GM10248 (cell line): ENCODE measurements at regions of chr19 and their contacts with region 1.

Region 1: GRCh38 chr19:11482384-11483050 is 1.7 kb upstream of the ELAVL3 start:
- DNase-seq: peak; percentile 93
- CTCF ChIP-seq: peak; percentile 96

Region 2: GRCh38 chr19:11346092-11346940 is 136.2 kb before region 1 on chr19 and contains the starts of genes CCDC159 and TMEM205:
- CTCF ChIA-PET with region 1: interaction called, 11 read pairs
- POLR2A ChIA-PET with region 1: no interaction called
- DNase-seq: peak; percentile 97
- CTCF ChIP-seq: peak; percentile 26

Region 3: DNA sequence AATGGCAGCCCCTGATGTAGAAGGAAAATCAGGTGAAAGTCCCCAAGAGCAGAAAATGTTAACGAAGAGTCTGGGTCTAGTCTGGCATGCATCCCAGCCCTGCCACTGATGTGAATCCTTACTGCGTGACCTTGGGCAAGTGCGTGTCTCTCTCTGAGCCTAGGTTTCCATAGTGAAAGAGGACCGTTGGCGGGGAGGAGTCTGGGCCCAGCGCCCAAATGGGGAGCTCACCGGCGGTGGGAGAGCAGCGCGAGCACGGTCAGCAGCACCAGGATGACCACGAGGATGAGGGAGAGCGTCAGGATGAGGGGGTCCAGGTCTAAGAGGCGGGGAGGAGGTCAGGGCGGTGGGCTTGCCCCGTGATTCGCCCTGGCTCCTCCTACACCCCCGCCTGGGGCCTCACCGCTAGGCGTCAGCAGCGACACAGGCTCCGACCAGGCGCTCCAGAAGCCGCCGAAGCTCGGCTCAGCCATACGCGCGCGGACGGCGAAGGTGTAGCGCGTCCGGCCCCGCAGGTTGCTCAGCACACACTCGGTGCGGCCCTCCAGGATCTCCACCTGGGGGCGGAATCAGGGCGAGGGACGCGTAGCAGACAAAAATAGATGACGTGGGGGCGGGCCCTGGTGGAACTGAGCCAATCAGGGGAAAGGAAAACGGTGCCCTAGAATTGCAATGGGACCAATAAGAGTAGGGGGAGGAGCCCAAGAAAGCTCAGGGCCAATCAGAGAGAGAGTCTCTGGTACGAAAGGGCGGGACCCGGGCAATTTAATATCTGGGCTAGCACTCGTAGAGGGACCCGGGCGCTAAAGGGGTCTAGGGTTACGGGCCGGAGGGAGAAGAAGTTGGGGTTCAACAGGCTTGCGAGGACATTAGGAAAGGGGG is 101.6 kb before region 1 on chr19:
- CTCF ChIA-PET with region 1: interaction called, 40 read pairs
- POLR2A ChIA-PET with region 1: interaction called, 4 read pairs
- DNase-seq: peak; percentile 98
- CTCF ChIP-seq: peak; percentile 67

Region 4: DNA sequence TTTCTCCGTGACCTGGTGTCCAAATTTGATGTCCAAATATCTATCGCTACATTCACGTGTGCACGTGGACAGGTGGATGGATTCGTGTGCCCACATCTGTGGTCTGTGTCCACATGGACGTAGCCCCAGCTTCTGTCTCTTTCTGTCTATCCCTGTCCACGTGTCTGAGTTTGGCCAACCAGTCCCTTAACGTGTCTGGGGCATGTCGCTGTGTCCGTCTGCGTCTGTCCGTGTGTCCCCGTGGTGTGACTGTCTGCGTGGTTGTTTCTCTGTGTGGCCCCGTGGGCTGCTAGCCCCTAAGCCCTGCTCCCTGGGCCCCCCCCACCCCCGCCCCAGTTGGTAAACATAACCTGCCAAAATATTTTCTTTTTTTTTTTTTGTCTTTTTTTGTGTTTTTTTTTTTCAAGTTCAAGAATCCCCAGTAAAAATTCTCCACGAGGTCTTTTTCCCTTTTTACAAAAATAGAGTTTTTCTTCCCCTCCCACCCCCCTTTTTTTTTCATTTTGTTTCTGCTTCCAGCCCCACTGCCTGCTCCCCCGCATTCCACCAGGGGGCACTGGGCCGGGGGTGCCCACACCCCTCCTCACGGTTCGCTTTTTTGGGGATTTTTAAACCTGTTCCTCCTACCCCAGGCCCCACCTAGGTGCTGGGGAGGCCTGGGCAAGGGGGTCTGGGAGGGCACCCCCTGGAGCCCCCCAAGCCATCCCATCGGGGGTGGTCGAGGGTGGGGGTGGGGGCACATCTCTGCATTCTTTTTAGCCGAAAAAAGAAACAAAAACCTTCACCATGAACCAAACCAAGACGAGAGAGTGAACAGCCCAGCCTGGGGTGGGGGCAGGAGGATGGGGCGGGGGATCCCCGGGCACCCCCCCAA is 28.8 kb before region 1 on chr19:
- CTCF ChIA-PET with region 1: interaction called, 13 read pairs
- POLR2A ChIA-PET with region 1: interaction called, 4 read pairs
- DNase-seq: peak; percentile 60
- CTCF ChIP-seq: peak; percentile 50

Region 5: GRCh38 chr19:11494634-11495285 is 12.2 kb after region 1 on chr19:
- CTCF ChIA-PET with region 1: interaction called, 24 read pairs
- POLR2A ChIA-PET with region 1: no interaction called
- DNase-seq: no peak
- CTCF ChIP-seq: no peak

Region 6: DNA sequence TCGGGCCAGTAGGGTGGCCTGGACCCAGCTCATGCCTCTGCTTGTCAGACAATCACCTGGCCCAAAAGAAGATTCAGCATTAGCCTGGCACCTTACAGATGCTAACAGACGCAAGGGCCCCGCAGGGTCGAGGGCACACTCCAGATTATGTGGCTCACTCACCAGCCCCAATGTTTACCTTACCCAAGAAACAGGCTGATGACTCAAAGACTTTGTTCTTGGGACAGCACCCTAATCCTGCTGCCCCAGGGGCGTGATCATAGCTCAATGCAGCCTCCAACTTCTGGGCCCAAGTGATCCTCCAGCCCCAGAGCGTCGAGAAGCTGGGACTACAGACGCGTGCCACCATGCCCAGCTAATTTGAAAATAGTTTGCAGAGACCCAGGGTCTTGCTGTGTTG is 36.6 kb after region 1 on chr19:
- CTCF ChIA-PET with region 1: interaction called, 10 read pairs
- POLR2A ChIA-PET with region 1: no interaction called
- DNase-seq: no peak
- CTCF ChIP-seq: no peak

Region 7: GRCh38 chr19:11659612-11660011 is 177.1 kb after region 1 on chr19:
- CTCF ChIA-PET with region 1: no interaction called
- POLR2A ChIA-PET with region 1: no interaction called
- DNase-seq: peak; percentile 41
- CTCF ChIP-seq: peak; percentile 49